MCF 10A (cell line): ENCODE measurements at regions of chr12 and their contacts with region 1.

Region 1: GRCh38 chr12:835754-836518 is 83.6 kb downstream of the WNK1 start:
- DNase-seq: peak; percentile 54
- H3K4me3 Mint-ChIP-seq: no peak overlapping the region
- H3K27ac Mint-ChIP-seq: no peak overlapping the region
- H3K4me1 Mint-ChIP-seq: peaks cover 17% of the 10 kb centered on the region
- H3K27me3 Mint-ChIP-seq: no peaks in the 10 kb centered on the region
- CTCF ChIP-seq: no peak

Region 2: DNA sequence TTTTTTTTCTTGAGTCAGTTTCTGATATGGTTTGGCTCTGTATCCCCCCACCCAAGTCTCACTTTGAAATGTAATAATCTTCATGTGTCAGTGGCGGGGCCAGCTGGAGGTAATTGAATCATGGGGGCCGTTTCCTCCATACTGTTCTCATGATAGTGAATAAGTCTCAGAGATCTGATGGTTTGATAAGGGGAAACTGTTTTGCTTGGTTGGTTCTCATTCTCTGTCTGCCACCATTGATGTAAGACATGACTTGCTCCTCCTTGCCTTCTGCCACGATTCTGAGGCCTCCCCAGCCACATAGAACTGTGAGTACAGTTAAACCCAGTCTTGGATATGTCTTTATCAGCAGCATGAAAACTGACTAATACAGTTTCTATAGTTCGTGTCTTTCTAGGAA is 40.6 kb before region 1 on chr12:
- CTCF ChIA-PET with region 1: no interaction called
- POLR2A ChIA-PET with region 1: no interaction called
- intact Hi-C with region 1: no loop called
- DNase-seq: no peak
- H3K4me3 Mint-ChIP-seq: no peak overlapping the region
- H3K27ac Mint-ChIP-seq: peak overlapping the region; percentile 59
- H3K4me1 Mint-ChIP-seq: peaks cover 60% of the 10 kb centered on the region
- H3K27me3 Mint-ChIP-seq: no peaks in the 10 kb centered on the region
- CTCF ChIP-seq: no peak

Region 3: DNA sequence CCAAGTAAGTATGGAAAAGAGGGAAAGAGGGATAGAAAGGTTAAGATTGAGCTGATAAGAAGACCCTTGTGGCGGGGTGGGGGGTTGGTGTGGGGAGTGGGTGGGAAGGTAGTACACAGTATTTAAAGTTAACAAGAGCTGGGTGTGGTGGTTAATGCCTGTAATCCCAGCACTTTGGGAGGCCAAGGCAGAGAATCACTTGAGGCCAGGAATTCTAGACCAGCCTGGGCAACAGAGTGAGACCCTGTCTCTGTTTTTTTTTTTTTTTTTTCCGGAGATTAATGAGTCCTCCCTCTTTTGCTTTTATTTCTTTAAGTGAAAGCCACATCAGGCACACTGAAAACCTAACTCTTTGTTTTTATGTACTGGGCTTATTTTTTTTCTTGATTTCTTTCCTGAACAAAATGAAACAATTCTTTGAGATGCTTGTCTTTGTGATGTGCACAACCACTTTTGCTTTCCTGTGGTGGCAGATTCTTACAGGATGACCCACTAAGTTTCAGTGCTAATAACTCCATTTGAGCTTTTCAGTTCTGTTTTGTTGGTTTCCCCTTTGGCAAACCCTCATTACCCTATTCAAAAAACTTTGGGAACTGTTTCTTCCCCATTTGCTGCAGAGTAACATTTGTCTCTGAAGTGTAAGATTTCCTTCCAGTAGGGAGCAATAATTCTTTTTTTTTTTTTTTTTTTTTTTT is 28.7 kb before region 1 on chr12:
- CTCF ChIA-PET with region 1: no interaction called
- POLR2A ChIA-PET with region 1: no interaction called
- intact Hi-C with region 1: no loop called
- DNase-seq: no peak
- H3K4me3 Mint-ChIP-seq: no peak overlapping the region
- H3K27ac Mint-ChIP-seq: no peak overlapping the region
- H3K4me1 Mint-ChIP-seq: peaks cover 26% of the 10 kb centered on the region
- H3K27me3 Mint-ChIP-seq: no peaks in the 10 kb centered on the region
- CTCF ChIP-seq: no peak

Region 4: GRCh38 chr12:851913-852312 is 16.0 kb after region 1 on chr12:
- CTCF ChIA-PET with region 1: interaction called, 3 read pairs
- POLR2A ChIA-PET with region 1: interaction called, 10 read pairs
- intact Hi-C with region 1: no loop called
- DNase-seq: peak; percentile 76
- H3K4me3 Mint-ChIP-seq: peak overlapping the region; percentile 63
- H3K27ac Mint-ChIP-seq: peak overlapping the region; percentile 80
- H3K4me1 Mint-ChIP-seq: peaks cover 44% of the 10 kb centered on the region
- H3K27me3 Mint-ChIP-seq: no peaks in the 10 kb centered on the region
- CTCF ChIP-seq: no peak